ENCODE measurements at regions of chr2 and their contacts with region 1.

Region 1: DNA sequence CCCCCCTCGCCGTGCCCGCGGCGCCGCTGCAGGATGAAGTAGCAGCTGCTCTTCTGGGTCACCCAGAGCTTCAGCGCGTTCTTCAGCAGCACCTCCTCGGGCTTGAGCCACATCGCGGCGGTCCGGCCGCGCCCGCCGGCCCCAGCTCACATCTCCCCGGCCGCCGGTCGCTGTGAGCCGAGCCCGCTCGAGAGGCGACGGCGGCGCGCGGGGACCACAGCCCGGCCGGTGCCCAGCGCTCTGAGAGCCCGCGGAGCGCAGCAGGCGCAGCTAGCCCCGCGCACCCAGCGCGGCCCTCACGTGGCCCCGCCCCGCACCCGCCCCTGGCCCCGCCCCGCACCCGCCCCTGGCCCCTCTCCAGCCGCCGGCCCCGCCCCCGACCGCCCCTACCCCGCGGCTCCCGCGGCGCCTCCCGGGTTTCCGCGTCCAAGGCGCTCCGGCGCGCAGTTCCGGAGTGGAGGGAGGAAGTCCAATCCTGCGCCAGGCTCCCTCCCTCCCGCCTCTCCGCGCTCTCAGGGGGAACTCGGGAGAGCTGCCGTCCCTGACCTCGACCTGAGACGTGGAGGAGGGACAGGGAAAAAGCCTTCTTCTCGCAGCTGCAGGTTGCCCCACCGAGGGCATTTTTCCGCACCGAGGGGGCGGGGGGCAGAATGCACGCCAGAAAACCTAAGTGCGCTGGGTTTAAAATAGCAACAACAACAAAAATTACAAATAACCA is at the start of gene TBC1D8:
- DNase-seq: peak; percentile 89 to 92
- H3K4me3 ChIP-seq: peak within 1 kb of the TSS in 2 of 3 donors; percentile 39 to 75
- H3K27ac ChIP-seq: peak within 1 kb of the TSS; percentile 32 to 83 (median 83)
- H3K4me1 ChIP-seq: peaks cover 12 to 30% of the 10 kb centered on the region in 2 donors
- H3K27me3 ChIP-seq: no peaks in the 10 kb centered on the region
- CTCF ChIP-seq: no peak
- POLR2A ChIP-seq: peak; percentile 29 to 90
- total RNA-seq, gene TBC1D8: 16.4 to 36.8 (median 27.1) TPM

Region 2: GRCh38 chr2:101012706-101013181 is 138.6 kb before region 1 on chr2:
- intact Hi-C with region 1: loop called (anchors 5 kb)
- DNase-seq: peak; percentile 20 to 26
- H3K4me3 ChIP-seq: no peak overlapping the region
- H3K27ac ChIP-seq: no peak overlapping the region
- H3K4me1 ChIP-seq: no peaks in the 10 kb centered on the region
- H3K27me3 ChIP-seq: no peaks in the 10 kb centered on the region
- CTCF ChIP-seq: peak; percentile 56 to 92 (median 77)
- POLR2A ChIP-seq: no peak

Region 3: DNA sequence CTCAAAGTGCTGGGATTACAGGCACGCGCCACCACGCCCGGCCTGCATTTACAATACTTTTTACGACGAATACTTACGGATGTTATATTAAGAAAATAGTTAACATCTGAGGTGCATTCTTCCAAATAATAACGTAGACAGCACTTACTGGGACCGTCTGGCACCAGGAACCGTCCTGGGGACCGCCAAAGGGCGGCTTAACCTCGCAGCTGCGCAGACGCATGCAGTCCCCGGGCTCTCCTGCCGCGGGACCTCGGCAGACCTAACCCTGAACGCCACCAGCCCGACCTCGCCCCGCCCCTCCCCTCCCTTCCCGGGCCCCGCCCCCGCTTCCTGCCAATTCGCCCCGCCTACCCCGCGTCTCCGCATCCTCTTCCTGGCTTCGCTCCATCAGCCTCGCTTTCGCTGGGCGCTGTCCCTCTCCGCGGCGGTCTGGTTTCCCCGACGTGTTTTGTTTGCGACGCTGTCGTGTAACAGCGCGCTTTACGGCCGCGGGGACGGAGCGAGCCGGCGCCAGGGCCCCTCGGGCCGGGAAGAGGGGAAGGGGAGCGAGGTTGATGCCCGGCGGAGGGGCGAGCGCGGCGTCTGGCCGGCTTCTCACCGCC is 101.2 kb after region 1 on chr2 and contains the start of gene CNOT11:
- intact Hi-C with region 1: loop called (anchors 10 kb)
- DNase-seq: peak; percentile 99
- H3K4me3 ChIP-seq: peak within 1 kb of the TSS; percentile 43 to 100 (median 98)
- H3K27ac ChIP-seq: peak within 1 kb of the TSS; percentile 67 to 96 (median 92)
- H3K4me1 ChIP-seq: peaks cover 19 to 24% of the 10 kb centered on the region in 2 donors
- H3K27me3 ChIP-seq: no peaks in the 10 kb centered on the region
- CTCF ChIP-seq: peak in 2 of 6 experiments; percentile 7 to 12
- POLR2A ChIP-seq: peak in 1 of 2 donors; percentile 75
- total RNA-seq, gene CNOT11: 27.5 to 41.6 (median 37.4) TPM

Region 4: GRCh38 chr2:101608408-101609317 is 457.4 kb after region 1 on chr2:
- intact Hi-C with region 1: no loop called
- DNase-seq: no peak
- H3K4me3 ChIP-seq: no peak overlapping the region
- H3K27ac ChIP-seq: no peak overlapping the region
- H3K4me1 ChIP-seq: no peaks in the 10 kb centered on the region
- H3K27me3 ChIP-seq: no peaks in the 10 kb centered on the region
- CTCF ChIP-seq: no peak
- POLR2A ChIP-seq: no peak